Body of pancreas (tissue), 4 donors: ENCODE measurements at regions of chr10 and their contacts with region 1.

Region 1: GRCh38 chr10:15370856-15371701 is at the start of gene FAM171A1:
- DNase-seq: peak; percentile 69 to 74 (median 73)
- ATAC-seq: peak; percentile 86
- H3K4me3 ChIP-seq: peak within 1 kb of the TSS; percentile 40 to 53
- H3K27ac ChIP-seq: peak within 1 kb of the TSS; percentile 47 to 79 (median 74)
- H3K4me1 ChIP-seq: peaks cover 20% of the 10 kb centered on the region
- H3K27me3 ChIP-seq: no peaks in the 10 kb centered on the region
- CTCF ChIP-seq: peak in 3 of 7 experiments; percentile 47 to 72 (median 59)
- POLR2A ChIP-seq: no peak
- total RNA-seq, gene FAM171A1: 22.1 to 29.1 TPM

Region 2: DNA sequence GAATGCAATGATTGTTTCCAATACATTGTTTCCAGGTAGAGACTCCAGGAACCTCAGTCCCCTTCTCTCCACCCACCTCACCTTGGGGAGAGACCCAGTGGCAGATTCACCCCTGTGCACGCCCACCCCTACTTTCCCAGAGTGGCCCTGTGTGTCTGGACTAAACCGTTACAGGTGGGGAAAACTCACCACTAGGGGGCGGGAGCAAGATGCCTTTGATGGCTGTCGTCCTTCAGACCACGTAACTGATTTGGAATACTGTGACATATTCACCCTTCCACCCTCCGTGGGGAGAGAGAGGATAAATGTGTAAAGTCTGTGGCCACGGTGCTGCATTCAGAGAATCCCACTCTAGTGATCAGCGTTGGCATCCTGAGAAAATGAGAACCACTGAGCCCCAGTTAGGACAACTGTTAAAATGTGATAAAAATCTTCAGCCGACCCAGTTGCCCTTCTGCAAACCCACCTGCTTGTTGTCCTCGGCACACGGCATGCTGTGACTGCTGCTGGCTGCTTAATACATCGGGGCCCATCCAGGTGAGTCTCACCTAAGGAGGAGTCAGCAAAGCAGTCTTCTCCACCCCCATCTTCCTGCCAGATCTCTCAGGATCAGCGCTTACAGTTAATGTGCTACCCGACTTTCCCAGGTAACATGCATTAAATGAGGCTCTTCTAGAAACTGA is 161.1 kb before region 1 on chr10:
- intact Hi-C with region 1: loop called (anchors 5 kb)
- DNase-seq: peak; percentile 86 to 92 (median 88)
- ATAC-seq: peak; percentile 88
- H3K4me3 ChIP-seq: no peak overlapping the region
- H3K27ac ChIP-seq: no peak overlapping the region
- H3K4me1 ChIP-seq: peaks cover 11% of the 10 kb centered on the region
- H3K27me3 ChIP-seq: no peaks in the 10 kb centered on the region
- CTCF ChIP-seq: peak; percentile 75 to 92 (median 80)
- POLR2A ChIP-seq: no peak

Region 3: GRCh38 chr10:15262036-15262713 is 108.9 kb before region 1 on chr10:
- intact Hi-C with region 1: loop called (anchors 10 kb)
- DNase-seq: peak; percentile 22 to 31 (median 28)
- ATAC-seq: peak; percentile 67
- H3K4me3 ChIP-seq: no peak overlapping the region
- H3K27ac ChIP-seq: peak overlapping the region in 2 of 4 donors; percentile 1 to 7
- H3K4me1 ChIP-seq: peaks cover 12% of the 10 kb centered on the region
- H3K27me3 ChIP-seq: no peaks in the 10 kb centered on the region
- CTCF ChIP-seq: peak in 6 of 7 experiments; percentile 9 to 60 (median 49)
- POLR2A ChIP-seq: no peak